ENCODE measurements at regions of chr9 and their contacts with region 1.

Region 1: GRCh38 chr9:33225319-33226149 is 14.4 kb upstream of the SPINK4 start:
- DNase-seq: peak; percentile 63
- H3K4me3 ChIP-seq: no peak overlapping the region
- H3K27ac ChIP-seq: no peak overlapping the region
- H3K4me1 ChIP-seq: peaks cover 49% of the 10 kb centered on the region
- H3K27me3 ChIP-seq: no peaks in the 10 kb centered on the region
- CTCF ChIP-seq: peak; percentile 60 to 61

Region 2: GRCh38 chr9:33076358-33077004 is 149.1 kb before region 1 on chr9 and contains the start of gene SMU1:
- CTCF ChIA-PET with region 1: interaction called, 3 read pairs
- dilution Hi-C with region 1: loop called (anchors 5 kb)
- in situ Hi-C with region 1: loop called in 1 of 2 experiments (anchors 5 kb)
- intact Hi-C with region 1: loop called (anchors 1 kb)
- DNase-seq: peak; percentile 96
- H3K4me3 ChIP-seq: peak within 1 kb of the TSS; percentile 57 to 75 (median 68)
- H3K27ac ChIP-seq: peak within 1 kb of the TSS; percentile 94
- H3K4me1 ChIP-seq: peaks cover 16% of the 10 kb centered on the region
- H3K27me3 ChIP-seq: no peaks in the 10 kb centered on the region
- CTCF ChIP-seq: no peak
- total RNA-seq, gene SMU1: 18.0 to 28.3 TPM

Region 3: GRCh38 chr9:33167046-33167808 is 58.3 kb before region 1 on chr9 and contains the start of gene B4GALT1:
- CTCF ChIA-PET with region 1: no interaction called
- dilution Hi-C with region 1: loop called (anchors 5 kb)
- in situ Hi-C with region 1: no loop called
- intact Hi-C with region 1: loop called (anchors 1 kb)
- DNase-seq: peak; percentile 95
- H3K4me3 ChIP-seq: peak within 1 kb of the TSS; percentile 73 to 86 (median 81)
- H3K27ac ChIP-seq: peak within 1 kb of the TSS; percentile 96
- H3K4me1 ChIP-seq: peaks cover 49% of the 10 kb centered on the region
- H3K27me3 ChIP-seq: no peaks in the 10 kb centered on the region
- CTCF ChIP-seq: peak in 1 of 2 donors; percentile 13
- total RNA-seq, gene B4GALT1: 82.2 to 135 TPM

Region 4: GRCh38 chr9:33311953-33312352 is 86.4 kb after region 1 on chr9:
- CTCF ChIA-PET with region 1: no interaction called
- dilution Hi-C with region 1: no loop called
- in situ Hi-C with region 1: no loop called
- intact Hi-C with region 1: no loop called
- DNase-seq: no peak
- H3K4me3 ChIP-seq: no peak overlapping the region
- H3K27ac ChIP-seq: no peak overlapping the region
- H3K4me1 ChIP-seq: no peaks in the 10 kb centered on the region
- H3K27me3 ChIP-seq: no peaks in the 10 kb centered on the region
- CTCF ChIP-seq: no peak

Region 5: DNA sequence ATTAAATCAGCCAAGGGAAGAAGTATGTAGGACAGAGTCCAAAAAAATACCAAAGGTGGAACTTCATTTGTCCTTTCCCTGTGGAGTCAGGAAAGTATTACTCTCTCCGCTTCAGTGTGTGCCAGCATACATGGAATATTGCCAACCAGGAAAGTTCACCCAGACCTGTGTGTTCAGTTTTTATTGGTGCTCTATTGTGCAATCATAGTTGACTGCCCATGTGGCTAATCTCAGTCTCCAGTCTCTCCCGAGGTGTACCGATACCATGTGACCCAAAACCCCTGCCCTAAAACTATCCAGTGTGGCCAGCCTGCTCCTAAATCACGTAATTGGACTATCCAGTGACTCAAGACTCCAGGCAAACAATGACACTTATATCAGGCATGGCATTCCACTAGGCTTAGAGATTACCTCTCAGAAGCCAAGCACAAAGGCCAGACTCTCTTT is 103.6 kb after region 1 on chr9:
- CTCF ChIA-PET with region 1: no interaction called
- dilution Hi-C with region 1: no loop called
- in situ Hi-C with region 1: no loop called
- intact Hi-C with region 1: loop called (anchors 2 kb)
- DNase-seq: peak; percentile 98
- H3K4me3 ChIP-seq: no peak overlapping the region
- H3K27ac ChIP-seq: peak overlapping the region; percentile 72
- H3K4me1 ChIP-seq: peaks cover 16% of the 10 kb centered on the region
- H3K27me3 ChIP-seq: no peaks in the 10 kb centered on the region
- CTCF ChIP-seq: no peak

Region 6: DNA sequence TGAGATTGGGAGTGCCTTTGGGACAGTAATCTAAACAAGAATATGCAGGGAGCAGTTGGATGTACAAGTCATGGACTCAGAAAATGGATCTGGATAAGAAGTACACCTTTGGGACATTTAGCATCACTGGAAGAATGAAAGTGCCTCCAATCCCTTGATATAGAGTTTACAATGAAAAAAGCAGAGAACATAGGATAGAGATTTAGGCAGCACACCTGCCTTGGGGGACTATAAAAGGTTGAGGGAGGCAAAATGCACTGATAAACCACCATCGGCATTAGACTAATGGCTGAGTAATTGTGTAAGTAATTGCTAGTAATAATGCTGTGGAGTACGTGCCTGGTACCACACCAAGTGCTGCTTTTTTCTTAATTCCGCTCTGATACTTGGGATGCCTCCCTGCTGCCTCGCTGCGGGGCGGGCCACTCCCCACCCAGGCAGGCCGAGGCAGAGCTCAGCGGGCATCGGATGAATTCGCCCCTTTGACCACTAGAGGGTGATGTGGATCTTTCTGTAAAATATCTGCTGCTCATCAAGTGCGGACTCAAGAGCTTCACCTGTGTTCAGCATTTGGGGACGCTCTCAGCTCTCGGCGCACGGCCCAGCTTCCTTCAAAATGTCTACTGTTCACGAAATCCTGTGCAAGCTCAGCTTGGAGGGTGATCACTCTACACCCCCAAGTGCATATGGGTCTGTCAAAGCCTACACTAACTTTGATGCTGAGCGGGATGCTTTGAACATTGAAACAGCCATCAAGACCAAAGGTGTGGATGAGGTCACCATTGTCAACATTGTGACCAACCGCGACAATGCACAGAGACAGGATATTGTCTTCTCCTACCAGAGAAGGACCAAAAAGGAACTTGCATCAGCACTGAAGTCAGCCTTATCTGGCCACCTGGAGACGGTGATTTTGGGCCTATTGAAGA is 398.4 kb after region 1 on chr9:
- CTCF ChIA-PET with region 1: no interaction called
- dilution Hi-C with region 1: no loop called
- in situ Hi-C with region 1: no loop called
- intact Hi-C with region 1: loop called (anchors 1 kb)
- DNase-seq: peak; percentile 74
- H3K4me3 ChIP-seq: no peak overlapping the region
- H3K27ac ChIP-seq: no peak overlapping the region
- H3K4me1 ChIP-seq: peaks cover 29% of the 10 kb centered on the region
- H3K27me3 ChIP-seq: no peaks in the 10 kb centered on the region
- CTCF ChIP-seq: peak; percentile 77 to 84

Measured in mammary epithelial cell (primary cell).